Activated CD4-positive, alpha-beta T cell treated with anti-CD3 and anti-CD28 coated beads for 36 hours (primary cell): ENCODE measurements at regions of chr12 and their contacts with region 1.

Region 1: GRCh38 chr12:1939801-1940607 is 21.6 kb upstream of the CACNA2D4 start:
- DNase-seq: peak; percentile 94
- ATAC-seq: peak; percentile 97
- H3K4me3 Mint-ChIP-seq: no peak overlapping the region
- H3K27ac Mint-ChIP-seq: no peak overlapping the region
- H3K4me1 Mint-ChIP-seq: peaks cover 4% of the 10 kb centered on the region
- H3K27me3 Mint-ChIP-seq: no peaks in the 10 kb centered on the region

Region 2: DNA sequence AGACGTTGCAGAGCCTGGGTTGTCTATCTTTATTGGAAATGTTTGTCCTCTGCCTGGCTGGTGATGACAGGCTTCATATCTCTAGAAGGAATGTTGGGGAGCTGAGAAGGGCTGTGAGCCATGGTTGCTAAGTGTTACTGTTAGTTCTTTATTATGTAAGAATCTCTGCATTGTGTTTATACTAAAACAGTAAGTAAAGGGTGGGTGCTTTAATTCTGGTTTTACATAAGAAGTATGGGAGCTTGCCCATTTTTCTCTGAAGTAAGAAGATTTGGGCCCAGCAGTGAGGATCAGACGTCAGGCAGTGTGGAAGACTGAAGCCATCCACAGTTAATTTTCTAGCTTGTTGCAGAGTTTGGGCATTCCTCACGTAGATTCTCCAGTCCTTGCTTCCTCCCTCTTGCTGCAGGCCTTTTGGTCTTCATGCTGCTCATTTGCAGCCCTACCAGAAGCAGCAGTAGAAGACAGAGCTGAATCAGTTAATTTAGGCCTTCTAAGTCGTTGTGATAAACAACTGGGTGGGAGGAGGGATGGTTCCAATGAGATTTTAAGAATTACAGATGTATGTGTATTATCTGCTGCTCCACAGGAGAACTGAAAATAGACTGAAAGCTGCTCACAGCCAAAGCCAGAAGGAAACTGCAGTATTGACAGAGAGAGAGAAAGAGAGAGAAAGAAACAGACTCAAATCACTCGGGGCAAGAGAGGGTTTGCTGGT is 289.6 kb before region 1 on chr12:
- CTCF ChIA-PET with region 1: interaction called, 50 read pairs
- POLR2A ChIA-PET with region 1: no interaction called
- intact Hi-C with region 1: loop called (anchors 1 to 2 kb)
- DNase-seq: no peak
- ATAC-seq: no peak
- H3K4me3 Mint-ChIP-seq: no peak overlapping the region
- H3K27ac Mint-ChIP-seq: no peak overlapping the region
- H3K4me1 Mint-ChIP-seq: peaks cover 1% of the 10 kb centered on the region
- H3K27me3 Mint-ChIP-seq: peaks cover 9% of the 10 kb centered on the region

Region 3: DNA sequence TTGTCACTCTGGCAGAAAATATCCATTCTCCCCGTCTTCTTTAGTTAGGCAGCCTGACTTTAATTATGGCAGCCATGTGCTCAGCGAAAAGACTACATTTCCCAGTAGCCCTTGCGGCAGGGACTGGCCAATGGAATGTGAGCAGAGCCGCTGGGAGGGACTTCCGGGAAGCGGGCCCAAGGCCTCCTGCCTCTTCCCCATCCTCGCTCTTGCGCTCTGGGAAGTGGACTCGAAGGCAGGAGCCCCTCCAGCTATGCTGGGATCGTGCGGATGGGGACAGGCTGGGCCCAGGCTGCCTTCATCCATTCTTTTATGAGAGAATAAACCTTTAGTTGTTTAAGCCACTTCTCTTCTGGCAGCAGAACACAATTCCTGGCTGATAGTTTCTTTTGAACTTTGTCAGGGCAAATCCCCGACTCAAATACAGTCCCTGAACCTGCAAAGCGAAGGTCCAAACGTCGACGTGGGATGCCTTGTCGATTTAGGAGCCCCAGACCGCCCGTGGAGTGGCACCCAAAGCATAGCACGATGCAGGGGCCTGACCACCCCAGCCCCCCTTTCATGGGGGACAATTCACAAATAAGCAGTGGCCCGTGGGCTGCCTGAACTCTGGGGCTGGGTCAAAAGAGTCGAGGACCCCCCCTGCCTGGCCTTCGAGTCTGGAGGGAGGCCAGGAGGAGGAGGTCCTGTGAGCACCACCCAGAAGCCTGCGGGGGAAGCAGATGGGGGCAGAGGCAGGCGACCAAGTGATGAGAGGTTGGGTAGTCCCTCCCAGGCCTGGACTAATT is 135.3 kb before region 1 on chr12:
- CTCF ChIA-PET with region 1: interaction called, 11 read pairs
- POLR2A ChIA-PET with region 1: no interaction called
- intact Hi-C with region 1: no loop called
- DNase-seq: peak; percentile 93
- ATAC-seq: peak; percentile 99
- H3K4me3 Mint-ChIP-seq: no peak overlapping the region
- H3K27ac Mint-ChIP-seq: peak overlapping the region; percentile 79
- H3K4me1 Mint-ChIP-seq: peaks cover 9% of the 10 kb centered on the region
- H3K27me3 Mint-ChIP-seq: no peaks in the 10 kb centered on the region

Region 4: DNA sequence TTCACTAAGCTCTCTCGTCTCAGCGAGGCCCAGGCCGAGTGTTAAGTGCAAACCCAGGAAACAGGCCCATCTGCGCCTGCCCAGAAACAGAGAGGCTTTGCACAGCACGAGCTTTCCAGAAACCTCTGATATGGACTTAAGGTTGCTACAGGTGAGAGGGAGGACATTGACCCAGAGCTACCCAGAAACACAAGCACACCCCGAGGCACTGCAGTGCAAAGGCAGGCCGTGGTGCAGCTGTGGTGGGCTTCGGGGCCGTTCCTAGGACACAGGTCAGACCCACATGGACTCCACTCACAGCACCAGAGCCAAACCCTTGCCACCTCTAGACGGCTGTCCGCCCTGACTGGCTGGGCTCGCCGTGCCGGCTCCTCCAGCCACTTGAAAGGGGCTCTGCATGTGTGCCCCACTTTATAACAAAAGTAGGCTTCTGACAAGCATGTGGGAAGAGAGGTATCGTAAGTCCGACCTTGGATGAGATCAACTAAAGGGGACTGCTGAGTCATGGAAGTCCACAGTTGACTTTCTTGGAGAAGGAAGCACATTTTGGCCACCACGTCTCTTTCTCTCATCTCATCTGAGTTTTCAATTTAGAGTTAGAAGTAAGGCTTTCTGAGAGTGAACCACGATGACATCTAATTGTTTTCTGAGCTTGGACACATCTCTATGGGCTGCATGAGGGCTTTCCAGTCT is 59.7 kb before region 1 on chr12:
- CTCF ChIA-PET with region 1: no interaction called
- POLR2A ChIA-PET with region 1: no interaction called
- intact Hi-C with region 1: no loop called
- DNase-seq: no peak
- ATAC-seq: no peak
- H3K4me3 Mint-ChIP-seq: no peak overlapping the region
- H3K27ac Mint-ChIP-seq: no peak overlapping the region
- H3K4me1 Mint-ChIP-seq: no peaks in the 10 kb centered on the region
- H3K27me3 Mint-ChIP-seq: peaks cover 1% of the 10 kb centered on the region

Region 5: GRCh38 chr12:1916371-1917171 is 23.4 kb before region 1 on chr12:
- CTCF ChIA-PET with region 1: interaction called, 11 read pairs
- POLR2A ChIA-PET with region 1: no interaction called
- intact Hi-C with region 1: no loop called
- DNase-seq: peak; percentile 2
- ATAC-seq: no peak
- H3K4me3 Mint-ChIP-seq: no peak overlapping the region
- H3K27ac Mint-ChIP-seq: peak overlapping the region; percentile 74
- H3K4me1 Mint-ChIP-seq: peaks cover 16% of the 10 kb centered on the region
- H3K27me3 Mint-ChIP-seq: peaks cover 1% of the 10 kb centered on the region

Region 6: GRCh38 chr12:2084553-2085296 is 144.7 kb after region 1 on chr12:
- CTCF ChIA-PET with region 1: no interaction called
- POLR2A ChIA-PET with region 1: no interaction called
- intact Hi-C with region 1: no loop called
- DNase-seq: no peak
- ATAC-seq: no peak
- H3K4me3 Mint-ChIP-seq: no peak overlapping the region
- H3K27ac Mint-ChIP-seq: no peak overlapping the region
- H3K4me1 Mint-ChIP-seq: no peaks in the 10 kb centered on the region
- H3K27me3 Mint-ChIP-seq: no peaks in the 10 kb centered on the region